ENCODE measurements at regions of chr10 and their contacts with region 1.

Region 1: DNA sequence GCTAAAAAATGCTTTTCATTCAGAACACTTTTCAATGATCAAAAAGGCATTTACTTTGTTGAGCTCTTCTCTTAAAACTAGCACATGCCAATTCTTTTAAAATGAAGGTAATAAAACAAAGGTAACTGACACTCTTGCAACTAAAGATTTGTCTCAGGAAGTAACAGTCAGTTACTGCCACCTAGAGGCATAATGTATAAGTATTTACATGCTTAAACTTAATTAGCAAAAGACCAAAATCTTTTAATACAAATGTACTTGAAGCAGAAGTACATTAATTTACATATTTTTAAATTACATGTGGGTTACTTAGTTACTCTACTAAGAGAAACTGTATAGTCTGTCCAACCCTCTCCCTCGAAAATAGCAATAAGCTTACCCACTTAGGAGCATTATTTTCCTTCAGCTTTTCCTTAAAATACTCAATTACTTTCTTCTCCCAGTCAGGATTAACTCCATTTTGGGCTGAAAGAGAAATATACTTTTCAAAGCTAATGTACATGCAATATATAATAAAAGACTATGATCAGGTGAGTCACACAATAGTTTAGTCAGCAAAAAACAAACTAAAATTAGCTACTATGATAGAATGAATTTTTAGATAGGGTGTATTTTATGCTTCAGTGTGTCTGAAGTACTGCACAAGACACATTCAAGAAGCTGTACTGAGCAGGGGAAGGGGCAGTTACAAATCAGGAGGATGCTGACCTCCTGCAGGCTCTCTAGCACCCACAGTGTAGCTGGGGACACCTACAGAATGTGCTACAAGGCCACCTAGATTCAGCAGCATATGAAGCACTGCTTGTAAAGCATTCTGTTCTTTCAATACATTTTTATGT is 13.0 kb downstream of the MCMBP start:
- DNase-seq: peak in 7 of 9 donors; percentile 21 to 62 (median 40)
- ATAC-seq: peak; percentile 81
- H3K4me3 ChIP-seq: no peak overlapping the region
- H3K4me3 Mint-ChIP-seq: peak overlapping the region in 1 of 10 donors; percentile 18
- H3K27ac ChIP-seq: no peak overlapping the region
- H3K27ac Mint-ChIP-seq: peak overlapping the region in 3 of 9 donors; percentile 13 to 49 (median 17)
- H3K4me1 ChIP-seq: no peaks in the 10 kb centered on the region
- H3K4me1 Mint-ChIP-seq: peaks cover 16 to 47% (median 40%) of the 10 kb centered on the region in 7 donors
- H3K27me3 ChIP-seq: no peaks in the 10 kb centered on the region
- H3K27me3 Mint-ChIP-seq: no peaks in the 10 kb centered on the region

Region 2: GRCh38 chr10:119199231-119199992 is 660.2 kb before region 1 on chr10:
- CTCF ChIA-PET with region 1: no interaction called
- POLR2A ChIA-PET with region 1: no interaction called
- intact Hi-C with region 1: loop called in 1 of 2 experiments (anchors 5 kb)
- DNase-seq: peak in 8 of 9 donors; percentile 42 to 72 (median 58)
- ATAC-seq: peak; percentile 93
- H3K4me3 ChIP-seq: no peak overlapping the region
- H3K4me3 Mint-ChIP-seq: peak overlapping the region in 1 of 10 donors; percentile 35
- H3K27ac ChIP-seq: no peak overlapping the region
- H3K27ac Mint-ChIP-seq: peak overlapping the region in 3 of 9 donors; percentile 46 to 73 (median 56)
- H3K4me1 ChIP-seq: no peaks in the 10 kb centered on the region
- H3K4me1 Mint-ChIP-seq: peaks cover 4 to 30% (median 9%) of the 10 kb centered on the region in 7 donors
- H3K27me3 ChIP-seq: no peaks in the 10 kb centered on the region
- H3K27me3 Mint-ChIP-seq: peaks cover 0 to 5% (median 0%) of the 10 kb centered on the region in 5 donors

Region 3: GRCh38 chr10:119608316-119609155 is 251.1 kb before region 1 on chr10:
- CTCF ChIA-PET with region 1: interaction called, 10 read pairs
- POLR2A ChIA-PET with region 1: no interaction called
- intact Hi-C with region 1: loop called in 1 of 2 experiments (anchors 1 kb)
- DNase-seq: peak in 6 of 9 donors; percentile 13 to 33 (median 26)
- ATAC-seq: peak; percentile 57
- H3K4me3 ChIP-seq: no peak overlapping the region
- H3K4me3 Mint-ChIP-seq: peak overlapping the region in 9 of 10 donors; percentile 42 to 67 (median 58)
- H3K27ac ChIP-seq: no peak overlapping the region
- H3K27ac Mint-ChIP-seq: peak overlapping the region in 1 of 9 donors; percentile 54
- H3K4me1 ChIP-seq: no peaks in the 10 kb centered on the region
- H3K4me1 Mint-ChIP-seq: peaks cover 3 to 12% (median 10%) of the 10 kb centered on the region in 7 donors
- H3K27me3 ChIP-seq: no peaks in the 10 kb centered on the region
- H3K27me3 Mint-ChIP-seq: peaks cover 0 to 18% (median 0%) of the 10 kb centered on the region in 5 donors

Region 4: DNA sequence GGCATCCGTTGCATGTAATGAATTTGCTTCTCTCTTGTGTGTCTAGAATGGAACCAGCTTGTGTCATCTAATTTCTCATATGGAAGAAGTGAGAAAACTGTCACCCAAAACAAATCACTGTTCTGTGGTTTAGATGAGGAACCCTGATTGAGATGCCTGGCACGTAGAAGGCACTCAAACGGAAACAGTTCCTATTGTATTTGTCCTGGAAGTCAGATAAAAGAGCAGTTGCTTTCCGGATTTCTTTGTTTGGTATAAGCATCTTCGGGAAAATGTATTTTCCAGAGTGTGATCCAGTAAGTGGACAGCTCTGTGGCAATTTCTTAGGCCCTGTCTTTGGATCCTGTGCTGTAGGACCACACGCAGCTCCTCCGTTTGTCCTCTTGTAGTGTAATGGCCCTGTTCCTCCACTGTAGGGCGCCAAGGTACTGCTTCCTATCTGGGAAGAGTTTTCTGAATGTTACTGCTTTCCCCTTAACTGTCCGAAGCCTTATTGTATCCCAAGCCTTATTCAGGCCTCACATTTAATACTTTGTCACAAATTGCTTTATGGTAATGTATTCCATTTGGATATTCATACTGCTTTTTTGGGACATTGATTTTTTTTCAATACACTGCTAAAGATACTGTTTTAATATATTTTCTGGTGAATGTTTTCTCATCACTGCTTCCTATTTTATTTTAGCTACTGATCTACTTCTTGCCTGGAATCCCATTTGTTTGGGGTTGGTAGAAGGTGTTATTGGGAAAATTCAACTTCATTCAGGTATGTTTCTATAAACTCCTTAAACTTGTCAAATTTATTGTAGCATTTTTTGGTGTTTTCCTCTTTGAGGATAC is 109.0 kb before region 1 on chr10:
- CTCF ChIA-PET with region 1: interaction called, 33 read pairs
- POLR2A ChIA-PET with region 1: no interaction called
- intact Hi-C with region 1: loop called (anchors 1 kb)
- DNase-seq: peak; percentile 14 to 59 (median 44)
- ATAC-seq: peak; percentile 99
- H3K4me3 ChIP-seq: no peak overlapping the region
- H3K4me3 Mint-ChIP-seq: peak overlapping the region in 1 of 10 donors; percentile 9
- H3K27ac ChIP-seq: no peak overlapping the region
- H3K27ac Mint-ChIP-seq: peak overlapping the region in 2 of 9 donors; percentile 1 to 11
- H3K4me1 ChIP-seq: no peaks in the 10 kb centered on the region
- H3K4me1 Mint-ChIP-seq: peaks cover 5 to 18% (median 12%) of the 10 kb centered on the region in 7 donors
- H3K27me3 ChIP-seq: no peaks in the 10 kb centered on the region
- H3K27me3 Mint-ChIP-seq: no peaks in the 10 kb centered on the region

Region 5: DNA sequence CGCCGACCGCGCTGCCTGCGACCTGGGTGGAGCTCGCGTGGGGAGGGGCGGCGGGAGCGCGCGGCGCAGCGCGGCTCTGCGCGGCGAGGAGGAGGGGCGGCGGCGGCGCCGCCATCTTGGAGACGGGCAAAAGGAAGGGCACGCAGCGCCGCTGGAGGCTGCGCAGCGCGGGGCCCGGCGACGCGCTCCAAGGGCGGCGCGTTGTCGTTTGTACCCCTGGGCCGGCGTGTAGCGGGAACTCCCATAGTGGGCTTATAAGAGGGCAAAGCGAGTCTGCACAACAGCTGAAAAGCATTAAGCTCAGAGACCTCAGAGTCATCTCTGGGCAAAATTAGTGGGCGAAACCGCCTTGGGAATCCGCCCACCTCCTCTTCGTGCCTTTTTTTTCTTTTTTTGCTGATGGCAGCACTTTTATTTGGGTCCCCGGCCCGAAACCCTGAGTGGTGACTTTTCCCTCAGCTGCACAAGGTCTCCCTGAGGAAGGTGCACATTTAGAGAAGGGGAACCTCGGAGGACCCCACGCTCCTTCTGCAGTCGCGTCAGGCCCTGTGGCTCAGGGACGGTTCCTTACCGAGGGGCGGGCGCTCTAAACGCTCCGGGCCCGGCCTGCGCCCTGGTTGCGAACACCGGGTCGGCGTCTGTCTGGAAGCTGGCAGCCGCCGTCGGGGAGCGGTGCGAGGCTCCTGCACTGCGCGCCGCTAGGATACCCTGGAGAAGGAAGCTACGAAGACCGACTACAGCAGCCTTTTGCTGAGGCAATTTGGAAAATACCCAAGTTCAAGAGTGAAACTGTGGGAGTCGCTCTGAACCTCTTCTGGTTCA is 13.4 kb after region 1 on chr10:
- CTCF ChIA-PET with region 1: interaction called, 28 read pairs
- POLR2A ChIA-PET with region 1: interaction called, 18 read pairs
- intact Hi-C with region 1: loop called in 1 of 2 experiments (anchors 1 kb)
- DNase-seq: peak; percentile 81 to 88 (median 86)
- ATAC-seq: peak; percentile 96
- H3K4me3 ChIP-seq: peak overlapping the region; percentile 97
- H3K4me3 Mint-ChIP-seq: peak overlapping the region; percentile 82 to 92 (median 89)
- H3K27ac ChIP-seq: peak overlapping the region; percentile 84
- H3K27ac Mint-ChIP-seq: peak overlapping the region; percentile 79 to 95 (median 92)
- H3K4me1 ChIP-seq: peaks cover 21 to 28% of the 10 kb centered on the region in 2 donors
- H3K4me1 Mint-ChIP-seq: peaks cover 23 to 46% (median 41%) of the 10 kb centered on the region in 7 donors
- H3K27me3 ChIP-seq: no peaks in the 10 kb centered on the region
- H3K27me3 Mint-ChIP-seq: peaks cover 0 to 6% (median 0%) of the 10 kb centered on the region in 5 donors

Region 6: GRCh38 chr10:120115959-120116358 is 256.3 kb after region 1 on chr10:
- CTCF ChIA-PET with region 1: no interaction called
- POLR2A ChIA-PET with region 1: no interaction called
- intact Hi-C with region 1: no loop called
- DNase-seq: no peak
- ATAC-seq: no peak
- H3K4me3 ChIP-seq: no peak overlapping the region
- H3K4me3 Mint-ChIP-seq: no peak overlapping the region
- H3K27ac ChIP-seq: no peak overlapping the region
- H3K27ac Mint-ChIP-seq: no peak overlapping the region
- H3K4me1 ChIP-seq: no peaks in the 10 kb centered on the region
- H3K4me1 Mint-ChIP-seq: no peaks in the 10 kb centered on the region
- H3K27me3 ChIP-seq: no peaks in the 10 kb centered on the region
- H3K27me3 Mint-ChIP-seq: peaks cover 3 to 51% (median 31%) of the 10 kb centered on the region in 5 donors

Measured in naive thymus-derived CD4-positive, alpha-beta T cell (primary cell).